ENCODE measurements at regions of chr3 and their contacts with region 1.

Region 1: DNA sequence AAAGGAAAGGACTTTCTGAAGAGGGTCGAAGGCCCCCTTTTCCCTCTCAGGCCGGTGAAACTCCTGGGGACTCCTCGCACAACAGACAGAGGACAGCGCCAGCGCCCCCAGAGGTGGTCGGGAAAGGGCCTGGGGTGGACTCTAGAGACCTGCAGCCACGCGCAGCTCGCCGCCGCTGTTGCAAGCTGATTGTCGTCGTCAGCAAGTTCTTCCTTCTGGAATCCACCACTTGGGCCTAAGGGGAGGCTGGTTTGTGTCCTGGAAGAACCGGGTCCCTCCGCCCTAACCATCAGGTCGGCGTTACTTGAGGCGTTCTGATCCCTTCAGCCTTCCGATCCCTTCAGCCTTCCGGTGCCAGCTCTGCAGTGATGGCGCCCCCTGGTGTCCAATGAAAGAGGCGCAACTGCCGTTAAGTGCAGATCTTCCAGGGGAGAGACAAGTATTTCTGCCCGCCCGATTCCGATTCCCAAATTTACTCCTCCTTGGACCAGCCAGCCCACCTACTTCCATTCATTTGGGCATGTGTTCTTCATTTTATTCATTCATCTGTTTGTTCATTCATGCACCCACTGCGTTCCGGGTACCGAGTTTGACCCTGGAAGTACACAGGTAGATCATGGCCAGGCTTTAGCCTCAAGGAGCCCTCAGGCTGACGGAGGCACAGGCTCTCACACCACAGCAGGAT is 77.2 kb upstream of the SLC6A11 start:
- DNase-seq: peak; percentile 84
- ATAC-seq: peak; percentile 93
- H3K4me3 ChIP-seq: peak overlapping the region; percentile 56
- H3K27ac ChIP-seq: no peak overlapping the region
- H3K4me1 ChIP-seq: no peaks in the 10 kb centered on the region
- H3K27me3 ChIP-seq: peaks cover 29% of the 10 kb centered on the region
- CTCF ChIP-seq: peak; percentile 92

Region 2: GRCh38 chr3:10344147-10344943 is 394.5 kb before region 1 on chr3:
- CTCF ChIA-PET with region 1: no interaction called
- POLR2A ChIA-PET with region 1: no interaction called
- intact Hi-C with region 1: loop called (anchors 1 kb)
- DNase-seq: peak; percentile 63
- ATAC-seq: peak; percentile 56
- H3K4me3 ChIP-seq: no peak overlapping the region
- H3K27ac ChIP-seq: no peak overlapping the region
- H3K4me1 ChIP-seq: no peaks in the 10 kb centered on the region
- H3K27me3 ChIP-seq: no peaks in the 10 kb centered on the region
- CTCF ChIP-seq: peak; percentile 98

Region 3: GRCh38 chr3:10417849-10418248 is 321.0 kb before region 1 on chr3:
- CTCF ChIA-PET with region 1: interaction called, 5 read pairs
- POLR2A ChIA-PET with region 1: no interaction called
- intact Hi-C with region 1: loop called (anchors 1 kb)
- DNase-seq: peak; percentile 11
- ATAC-seq: peak; percentile 73
- H3K4me3 ChIP-seq: no peak overlapping the region
- H3K27ac ChIP-seq: no peak overlapping the region
- H3K4me1 ChIP-seq: peaks cover 6% of the 10 kb centered on the region; the same call in 1 of the 2 replicates
- H3K27me3 ChIP-seq: peaks cover 25% of the 10 kb centered on the region
- CTCF ChIP-seq: peak; percentile 42

Region 4: DNA sequence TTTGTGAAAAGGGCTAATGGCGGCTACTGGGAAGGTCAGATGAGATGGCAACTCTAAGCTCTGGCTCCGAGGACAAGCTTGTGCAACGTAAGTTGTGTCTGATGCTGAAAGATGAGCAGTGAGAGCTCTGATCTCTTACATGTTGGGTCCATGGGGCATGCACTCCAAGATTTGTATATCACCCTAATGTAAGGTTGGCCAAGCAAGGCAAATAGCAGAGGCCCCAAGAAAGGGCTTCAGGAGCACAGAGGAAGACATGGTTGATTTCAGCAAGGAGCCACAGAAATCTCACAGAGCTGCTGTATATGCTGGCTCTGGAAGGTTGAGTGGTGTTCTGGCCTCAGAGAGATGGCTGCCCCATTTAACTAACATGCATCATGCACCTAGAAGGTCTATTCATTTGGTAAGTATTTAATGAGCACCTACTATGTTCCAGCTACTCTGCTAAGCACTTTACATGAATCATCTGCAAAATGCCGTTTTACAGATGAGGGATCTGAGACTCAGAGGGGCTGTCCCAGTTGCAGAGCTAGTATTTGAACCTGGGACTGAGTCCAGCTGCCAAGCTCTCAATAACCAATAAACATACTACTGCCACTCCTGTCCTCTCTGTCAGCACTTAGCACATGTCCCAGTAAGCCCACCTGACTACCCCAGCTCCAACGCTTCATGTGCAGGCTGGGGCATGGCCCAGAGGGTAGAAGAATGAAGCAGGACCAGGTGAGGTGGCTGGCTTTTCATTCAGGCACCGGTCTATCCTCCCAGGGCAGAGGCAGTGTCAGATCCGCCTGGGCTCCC is 205.7 kb before region 1 on chr3:
- CTCF ChIA-PET with region 1: no interaction called
- POLR2A ChIA-PET with region 1: no interaction called
- intact Hi-C with region 1: loop called (anchors 5 kb)
- DNase-seq: no peak
- ATAC-seq: no peak
- H3K4me3 ChIP-seq: no peak overlapping the region
- H3K27ac ChIP-seq: no peak overlapping the region
- H3K4me1 ChIP-seq: no peaks in the 10 kb centered on the region
- H3K27me3 ChIP-seq: peaks cover 62% of the 10 kb centered on the region
- CTCF ChIP-seq: no peak

Region 5: GRCh38 chr3:11128682-11129632 is 390.1 kb after region 1 on chr3:
- CTCF ChIA-PET with region 1: no interaction called
- POLR2A ChIA-PET with region 1: no interaction called
- intact Hi-C with region 1: no loop called
- DNase-seq: no peak
- ATAC-seq: no peak
- H3K4me3 ChIP-seq: no peak overlapping the region
- H3K27ac ChIP-seq: no peak overlapping the region
- H3K4me1 ChIP-seq: no peaks in the 10 kb centered on the region
- H3K27me3 ChIP-seq: no peaks in the 10 kb centered on the region
- CTCF ChIP-seq: no peak

Measured in PC-3 (cell line).